Heart left ventricle (tissue), 16 donors: ENCODE measurements at regions of chr14 and their contacts with region 1.

Region 1: GRCh38 chr14:99982537-99983250 is 82.5 kb upstream of the EVL start:
- DNase-seq: peak in 3 of 5 donors; percentile 48 to 59 (median 57)
- ATAC-seq: peak; percentile 77 to 92 (median 89)
- H3K4me3 ChIP-seq: no peak overlapping the region
- H3K27ac ChIP-seq: no peak overlapping the region
- H3K4me1 ChIP-seq: peaks cover 0 to 20% (median 2%) of the 10 kb centered on the region in 12 donors
- H3K27me3 ChIP-seq: no peaks in the 10 kb centered on the region
- CTCF ChIP-seq: peak; percentile 78 to 94 (median 90)
- POLR2A ChIP-seq: no peak

Region 2: DNA sequence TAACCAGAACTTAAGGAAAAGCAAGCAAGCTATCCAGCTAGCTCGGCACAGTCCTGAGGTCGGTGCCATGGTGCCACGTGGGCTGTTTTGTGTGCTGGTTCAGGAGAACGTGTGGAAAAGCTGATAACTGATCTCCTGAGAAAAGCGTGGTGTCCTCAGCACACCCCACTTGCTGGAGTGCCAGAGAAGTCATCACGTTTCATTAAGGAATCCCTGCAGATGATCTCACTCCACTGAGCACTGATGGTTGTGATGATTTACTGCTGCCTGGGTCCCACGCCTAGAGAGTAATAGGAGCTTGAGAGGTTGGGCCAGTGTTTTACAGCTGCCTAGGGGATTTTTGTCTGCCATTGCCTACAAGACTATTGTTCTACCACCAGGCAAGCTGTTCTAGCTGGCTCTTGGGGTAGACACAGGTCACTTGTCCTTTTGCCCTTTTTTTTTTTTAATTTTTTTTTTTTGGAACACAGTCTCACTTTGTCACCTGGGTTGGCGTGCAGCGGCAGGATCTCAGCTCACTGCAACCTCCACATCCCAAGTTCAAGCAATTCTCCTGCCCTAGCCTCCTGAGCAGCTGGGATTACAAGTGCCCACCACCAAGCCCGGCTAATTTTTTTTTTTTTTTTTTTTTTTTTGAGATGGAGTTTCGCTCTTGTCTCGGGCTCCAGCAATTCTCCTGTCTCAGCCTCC is 40.2 kb after region 1 on chr14:
- intact Hi-C with region 1: loop called in 1 of 10 experiments (anchors 5 kb)
- DNase-seq: peak in 1 of 5 donors; percentile 30
- ATAC-seq: peak; percentile 36 to 66 (median 56)
- H3K4me3 ChIP-seq: no peak overlapping the region
- H3K27ac ChIP-seq: no peak overlapping the region
- H3K4me1 ChIP-seq: peaks cover 0 to 56% (median 26%) of the 10 kb centered on the region in 12 donors
- H3K27me3 ChIP-seq: no peaks in the 10 kb centered on the region
- CTCF ChIP-seq: no peak
- POLR2A ChIP-seq: no peak

Region 3: DNA sequence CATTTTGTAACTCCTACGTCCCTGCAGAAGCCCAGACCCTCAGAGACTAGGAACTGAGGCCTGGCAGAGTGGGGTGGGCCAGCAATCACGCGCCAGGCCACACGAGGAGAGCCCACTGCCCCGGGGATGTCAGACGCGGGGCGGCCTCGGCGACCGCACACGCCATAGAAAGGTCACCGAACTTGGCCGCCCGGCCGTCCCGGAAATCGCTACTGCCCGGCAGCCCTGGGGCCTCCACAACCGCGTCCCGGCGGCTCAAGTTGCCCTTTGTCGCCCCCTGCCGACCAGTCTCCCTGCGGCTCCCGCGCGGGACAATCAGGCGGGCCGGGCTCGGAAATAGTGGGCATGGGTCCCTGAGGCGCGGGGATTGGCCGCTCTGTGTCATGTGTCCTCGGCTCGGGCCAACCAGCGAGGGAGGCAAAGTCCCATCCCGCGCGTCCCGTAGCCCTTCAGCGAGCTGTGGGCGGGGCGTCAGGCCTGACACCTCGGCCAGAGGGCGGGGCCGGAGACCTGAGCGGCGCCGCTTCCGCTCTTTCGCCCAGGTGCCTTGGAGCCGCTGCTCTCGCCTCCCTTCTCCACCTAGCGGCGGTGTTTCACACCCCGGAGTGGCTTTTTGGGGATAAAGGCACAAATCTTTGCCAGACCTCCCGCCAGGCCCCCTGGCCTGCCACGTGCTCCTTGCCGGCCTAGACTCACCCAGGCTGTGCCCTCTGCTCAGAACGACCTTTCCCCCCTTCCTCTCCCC is 210.2 kb after region 1 on chr14:
- intact Hi-C with region 1: loop called (anchors 1 to 5 kb)
- DNase-seq: peak; percentile 99 to 100 (median 99)
- ATAC-seq: peak; percentile 99 to 100 (median 100)
- H3K4me3 ChIP-seq: peak overlapping the region in 11 of 12 donors; percentile 16 to 63 (median 52)
- H3K27ac ChIP-seq: peak overlapping the region; percentile 80 to 97 (median 90)
- H3K4me1 ChIP-seq: peaks cover 0 to 21% (median 14%) of the 10 kb centered on the region in 12 donors
- H3K27me3 ChIP-seq: no peaks in the 10 kb centered on the region
- CTCF ChIP-seq: peak; percentile 89 to 98 (median 96)
- POLR2A ChIP-seq: peak in 1 of 2 donors; percentile 58